H1 (cell line): ENCODE measurements at regions of chr17 and their contacts with region 1.

Region 1: DNA sequence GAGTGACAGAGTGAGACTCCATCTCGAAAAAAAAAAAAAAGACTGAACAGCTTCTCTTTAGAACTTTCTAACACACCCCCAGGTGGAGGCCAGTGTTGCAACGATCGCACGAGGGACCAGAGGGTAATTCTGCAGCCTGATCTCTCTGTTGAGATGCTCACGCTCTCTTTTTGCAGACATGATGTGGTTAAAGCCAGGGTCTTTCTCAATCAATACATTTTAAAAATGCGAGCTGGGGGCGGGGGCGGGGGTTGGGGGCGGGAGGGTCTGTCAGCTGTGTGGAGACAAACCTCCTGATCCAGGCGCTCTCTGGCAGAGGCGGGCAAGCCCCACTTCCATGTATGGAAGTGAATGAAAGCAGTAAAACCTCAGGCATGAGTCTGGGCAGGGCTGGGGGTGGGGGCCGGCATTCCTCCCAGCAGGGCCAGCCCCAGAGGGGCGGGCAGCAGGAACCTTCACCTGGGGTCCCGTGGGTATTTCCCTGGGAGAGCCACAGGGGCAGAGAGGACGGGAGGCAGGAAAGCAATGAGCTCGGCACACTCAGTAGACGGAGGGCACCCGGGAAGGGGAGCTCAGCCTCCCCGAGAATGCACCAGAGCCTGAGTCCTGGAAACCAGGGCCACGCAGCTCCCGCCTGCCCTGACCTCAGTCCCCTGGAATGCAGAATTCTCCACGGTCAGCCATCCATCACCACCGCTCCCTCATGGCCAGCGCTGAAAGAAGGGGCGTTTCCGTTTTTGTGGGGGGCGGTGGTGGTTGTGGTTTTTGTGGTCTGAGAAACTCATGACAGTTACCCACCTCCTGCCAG is 28.0 kb downstream of the NXN start:
- DNase-seq: peak; percentile 75 to 77
- H3K4me3 ChIP-seq: peak overlapping the region in 1 of 4 experiments; percentile 39; a peak in 3 of 8 replicates
- H3K27ac ChIP-seq: peak overlapping the region; percentile 66
- H3K4me1 ChIP-seq: peaks cover 10 to 23% (median 13%) of the 10 kb centered on the region in 4 experiments
- H3K27me3 ChIP-seq: no peaks in the 10 kb centered on the region
- CTCF ChIP-seq: no peak
- EP300 ChIP-seq: no peak
- POLR2A ChIP-seq: peak in 1 of 2 experiments; percentile 79; a peak in 1 of 3 replicates
- RAD21 ChIP-seq: 0 out of 4 replicates have a peak, but pooled peaks of 1 of the 2 experiments have one; percentile 2

Region 2: GRCh38 chr17:927611-928461 is 23.7 kb before region 1 on chr17:
- CTCF ChIA-PET with region 1: interaction called, 6 read pairs
- POLR2A ChIA-PET with region 1: interaction called, 13 read pairs
- DNase-seq: no peak
- H3K4me3 ChIP-seq: 0 out of 8 replicates have a peak overlapping the region, but pooled peaks of 1 of the 4 experiments have one; percentile 1
- H3K27ac ChIP-seq: peak overlapping the region; percentile 25; the same call in 1 of the 2 replicates
- H3K4me1 ChIP-seq: peaks cover 10 to 22% (median 17%) of the 10 kb centered on the region in 4 experiments
- H3K27me3 ChIP-seq: no peaks in the 10 kb centered on the region
- CTCF ChIP-seq: no peak
- EP300 ChIP-seq: no peak
- POLR2A ChIP-seq: no peak
- RAD21 ChIP-seq: no peak

Region 3: GRCh38 chr17:933312-934083 is 18.0 kb before region 1 on chr17:
- CTCF ChIA-PET with region 1: interaction called, 6 read pairs
- POLR2A ChIA-PET with region 1: interaction called, 13 read pairs
- DNase-seq: no peak
- H3K4me3 ChIP-seq: no peak overlapping the region
- H3K27ac ChIP-seq: no peak overlapping the region
- H3K4me1 ChIP-seq: peaks cover 4 to 23% (median 11%) of the 10 kb centered on the region in 4 experiments
- H3K27me3 ChIP-seq: no peaks in the 10 kb centered on the region; a peak in 1 of 7 replicates
- CTCF ChIP-seq: no peak
- EP300 ChIP-seq: no peak
- POLR2A ChIP-seq: no peak
- RAD21 ChIP-seq: no peak

Region 4: GRCh38 chr17:964876-965275 is 13.3 kb after region 1 on chr17:
- CTCF ChIA-PET with region 1: interaction called, 5 read pairs
- POLR2A ChIA-PET with region 1: interaction called, 13 read pairs
- DNase-seq: no peak
- H3K4me3 ChIP-seq: no peak overlapping the region
- H3K27ac ChIP-seq: no peak overlapping the region
- H3K4me1 ChIP-seq: peaks cover 9 to 30% (median 25%) of the 10 kb centered on the region in 4 experiments
- H3K27me3 ChIP-seq: no peaks in the 10 kb centered on the region
- CTCF ChIP-seq: no peak
- EP300 ChIP-seq: no peak
- POLR2A ChIP-seq: no peak
- RAD21 ChIP-seq: no peak